ENCODE measurements at regions of chr4 and their contacts with region 1.

Region 1: GRCh38 chr4:121898150-121898549 is 27.9 kb upstream of the BBS7 start:
- DNase-seq: no peak
- H3K4me3 ChIP-seq: no peak overlapping the region
- H3K27ac ChIP-seq: no peak overlapping the region
- H3K4me1 ChIP-seq: no peaks in the 10 kb centered on the region
- H3K27me3 ChIP-seq: no peaks in the 10 kb centered on the region

Region 2: DNA sequence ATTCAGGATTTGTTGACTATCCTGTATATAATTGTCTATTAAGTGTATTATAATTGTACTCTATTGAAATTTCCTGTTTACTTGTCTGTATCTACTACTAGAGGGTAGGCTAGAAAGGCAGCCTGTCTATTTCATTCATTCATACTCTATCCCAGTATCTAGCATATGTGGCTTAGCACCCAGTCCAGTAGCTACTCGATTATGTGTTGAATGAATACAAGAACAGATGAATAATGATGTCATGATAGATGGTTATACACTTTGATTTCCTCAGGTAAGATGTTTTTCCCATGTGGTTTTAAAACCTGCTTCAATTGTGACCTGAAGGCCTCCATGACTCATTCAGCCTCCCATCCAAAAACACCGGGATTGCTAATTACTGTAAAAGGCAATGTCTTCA is 654.7 kb after region 1 on chr4:
- in situ Hi-C with region 1: loop called (anchors 25 kb)
- DNase-seq: no peak
- H3K4me3 ChIP-seq: no peak overlapping the region
- H3K27ac ChIP-seq: no peak overlapping the region
- H3K4me1 ChIP-seq: 0 out of 2 replicates have a peak, but pooled peaks cover 5% of the 10 kb centered on the region
- H3K27me3 ChIP-seq: no peaks in the 10 kb centered on the region

Measured in GM23248 (cell line).